ENCODE measurements at regions of chr18 and their contacts with region 1.

Region 1: DNA sequence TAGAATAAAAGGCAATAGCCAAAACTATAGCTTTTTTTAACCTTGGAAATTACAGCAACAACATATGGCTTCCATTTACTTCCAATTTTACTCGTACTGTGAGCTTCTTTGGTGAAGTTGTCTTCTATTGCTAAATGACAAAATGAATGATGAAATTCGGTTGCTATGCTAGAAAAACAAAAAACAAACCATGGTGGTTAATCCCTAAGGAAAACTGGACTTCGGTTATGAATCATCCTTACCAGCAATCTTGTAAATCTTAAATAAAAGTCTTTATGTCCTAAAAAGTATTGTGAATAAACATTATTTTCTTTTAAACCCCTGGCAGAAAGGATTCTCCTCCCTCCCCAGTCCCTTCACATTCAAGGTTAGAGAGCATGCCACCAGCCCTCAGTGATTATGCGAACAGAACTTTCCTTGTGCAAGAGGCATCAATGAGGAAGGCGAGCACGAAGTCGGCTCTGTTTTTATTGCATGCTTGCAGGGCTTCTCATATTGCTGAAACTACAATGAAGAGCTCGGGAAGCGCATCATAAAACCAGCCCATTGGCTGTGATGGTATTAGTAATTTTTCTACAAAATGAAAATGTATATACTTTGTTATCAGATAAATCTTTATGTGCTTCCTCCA is 62.9 kb downstream of the ZNF521 start:
- DNase-seq: no peak
- H3K4me3 ChIP-seq: no peak overlapping the region
- H3K27ac ChIP-seq: no peak overlapping the region
- H3K4me1 ChIP-seq: no peaks in the 10 kb centered on the region
- H3K27me3 ChIP-seq: no peaks in the 10 kb centered on the region
- CTCF ChIP-seq: no peak
- POLR2A ChIP-seq: no peak

Region 2: DNA sequence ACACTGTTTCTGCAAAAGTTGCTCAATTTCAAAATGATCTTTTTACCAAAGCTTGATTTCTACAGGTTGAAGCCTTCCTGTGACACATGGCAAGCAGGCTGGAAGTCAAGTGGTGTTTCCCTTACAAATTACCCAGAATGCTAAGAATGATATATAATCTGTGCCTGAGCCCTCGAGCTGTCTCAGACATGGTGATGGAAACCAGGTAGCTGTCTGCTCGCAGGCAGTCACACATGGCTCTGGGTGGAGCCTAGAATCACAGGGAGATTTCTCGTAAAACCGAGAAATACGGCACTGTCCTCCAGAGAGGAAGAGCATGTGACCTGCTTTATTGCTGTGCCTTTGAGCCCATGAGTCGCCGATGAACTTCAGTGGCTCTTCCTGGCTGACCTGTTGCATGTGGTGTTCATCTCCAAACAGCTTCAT is 330.1 kb before region 1 on chr18:
- intact Hi-C with region 1: no loop called
- DNase-seq: no peak
- H3K4me3 ChIP-seq: no peak overlapping the region
- H3K27ac ChIP-seq: no peak overlapping the region
- H3K4me1 ChIP-seq: no peaks in the 10 kb centered on the region
- H3K27me3 ChIP-seq: no peaks in the 10 kb centered on the region
- CTCF ChIP-seq: no peak
- POLR2A ChIP-seq: no peak

Region 3: GRCh38 chr18:25229080-25229479 is 60.0 kb before region 1 on chr18:
- intact Hi-C with region 1: loop called (anchors 2 kb)
- DNase-seq: peak; percentile 13
- H3K4me3 ChIP-seq: no peak overlapping the region
- H3K27ac ChIP-seq: no peak overlapping the region
- H3K4me1 ChIP-seq: no peaks in the 10 kb centered on the region
- H3K27me3 ChIP-seq: no peaks in the 10 kb centered on the region
- CTCF ChIP-seq: no peak
- POLR2A ChIP-seq: no peak

Measured in prostate gland (tissue), 2 donors.